H1 (cell line): ENCODE measurements at regions of chr10 and their contacts with region 1.

Region 1: DNA sequence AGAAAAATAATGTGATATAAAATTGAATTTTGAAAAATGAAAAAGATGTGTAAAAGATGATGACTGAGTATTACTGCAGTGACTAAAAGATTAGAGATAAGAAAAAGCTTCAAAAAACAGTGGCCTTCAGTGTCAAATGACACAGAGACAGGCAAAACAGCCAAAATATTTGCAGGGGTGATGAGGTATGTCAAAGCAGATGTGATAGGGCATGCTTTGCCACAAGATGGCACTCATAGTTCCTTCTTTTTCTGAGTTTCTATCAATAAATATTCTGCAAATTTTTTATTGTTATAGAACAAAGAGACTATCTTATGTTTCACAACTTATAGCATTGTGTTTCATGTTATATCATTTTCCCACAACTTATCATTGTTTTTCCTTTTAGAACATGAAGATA is 344.1 kb upstream of the HPS1 start:
- DNase-seq: no peak
- H3K4me3 ChIP-seq: no peak overlapping the region
- H3K27ac ChIP-seq: no peak overlapping the region
- H3K4me1 ChIP-seq: no peaks in the 10 kb centered on the region
- H3K27me3 ChIP-seq: no peaks in the 10 kb centered on the region
- CTCF ChIP-seq: peak in 2 of 3 experiments; percentile 38 to 54; a peak in 2 of 4 replicates
- EP300 ChIP-seq: no peak
- POLR2A ChIP-seq: no peak
- RAD21 ChIP-seq: peak; percentile 68 to 69

Region 2: GRCh38 chr10:99172130-99172738 is 381.4 kb after region 1 on chr10:
- CTCF ChIA-PET with region 1: interaction called, 10 read pairs
- POLR2A ChIA-PET with region 1: no interaction called
- DNase-seq: peak; percentile 13 to 55
- H3K4me3 ChIP-seq: no peak overlapping the region
- H3K27ac ChIP-seq: no peak overlapping the region
- H3K4me1 ChIP-seq: peaks cover 0 to 6% (median 0%) of the 10 kb centered on the region in 4 experiments; a peak in 1 of 7 replicates
- H3K27me3 ChIP-seq: no peaks in the 10 kb centered on the region
- CTCF ChIP-seq: peak; percentile 44 to 83 (median 74)
- EP300 ChIP-seq: no peak
- POLR2A ChIP-seq: no peak
- RAD21 ChIP-seq: peak; percentile 92 to 94